Left cardiac atrium (tissue), 4 donors: ENCODE measurements at regions of chr1 and their contacts with region 1.

Region 1: GRCh38 chr1:212782422-212783154 is 9.0 kb downstream of the NSL1 start:
- DNase-seq: no peak
- ATAC-seq: peak; percentile 50 to 67

Region 2: DNA sequence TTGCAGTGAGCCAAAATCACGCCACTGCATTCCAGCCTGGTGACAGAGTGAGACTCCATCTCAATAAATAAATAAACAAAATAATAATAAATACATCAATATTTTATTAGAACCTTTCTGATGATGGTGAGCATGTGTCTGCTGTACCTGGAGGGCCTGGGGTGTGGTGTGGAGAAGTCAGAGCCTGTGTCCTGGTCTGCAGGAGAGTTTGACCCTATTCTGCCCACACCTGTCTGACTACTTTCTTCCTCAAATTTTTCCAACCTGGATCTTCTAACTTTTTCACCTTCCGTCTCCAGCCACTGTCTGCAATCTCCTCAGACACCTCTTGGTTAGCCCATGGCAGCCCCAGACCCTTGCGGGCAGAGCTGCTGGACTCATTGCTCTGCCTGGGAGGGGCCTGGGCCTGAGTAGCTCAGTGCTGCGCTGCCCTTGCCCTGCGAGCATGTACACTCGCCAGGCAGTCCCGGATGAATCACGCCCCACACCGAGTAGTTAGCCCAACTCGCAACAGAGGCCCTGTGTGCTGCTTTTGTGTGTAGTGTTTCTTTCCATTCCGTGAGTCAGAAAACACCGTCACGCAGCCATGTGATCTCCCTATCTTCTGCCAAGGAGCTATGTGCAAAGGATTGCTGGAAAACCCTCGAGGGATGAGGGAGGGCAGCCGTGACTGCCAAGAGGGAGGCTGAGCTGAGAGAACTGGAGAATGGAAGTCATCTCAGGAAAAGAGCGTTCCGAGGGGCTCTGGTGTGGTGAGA is 312.7 kb before region 1 on chr1:
- intact Hi-C with region 1: loop called (anchors 5 to 10 kb)
- DNase-seq: peak; percentile 88
- ATAC-seq: peak; percentile 93 to 98

Region 3: DNA sequence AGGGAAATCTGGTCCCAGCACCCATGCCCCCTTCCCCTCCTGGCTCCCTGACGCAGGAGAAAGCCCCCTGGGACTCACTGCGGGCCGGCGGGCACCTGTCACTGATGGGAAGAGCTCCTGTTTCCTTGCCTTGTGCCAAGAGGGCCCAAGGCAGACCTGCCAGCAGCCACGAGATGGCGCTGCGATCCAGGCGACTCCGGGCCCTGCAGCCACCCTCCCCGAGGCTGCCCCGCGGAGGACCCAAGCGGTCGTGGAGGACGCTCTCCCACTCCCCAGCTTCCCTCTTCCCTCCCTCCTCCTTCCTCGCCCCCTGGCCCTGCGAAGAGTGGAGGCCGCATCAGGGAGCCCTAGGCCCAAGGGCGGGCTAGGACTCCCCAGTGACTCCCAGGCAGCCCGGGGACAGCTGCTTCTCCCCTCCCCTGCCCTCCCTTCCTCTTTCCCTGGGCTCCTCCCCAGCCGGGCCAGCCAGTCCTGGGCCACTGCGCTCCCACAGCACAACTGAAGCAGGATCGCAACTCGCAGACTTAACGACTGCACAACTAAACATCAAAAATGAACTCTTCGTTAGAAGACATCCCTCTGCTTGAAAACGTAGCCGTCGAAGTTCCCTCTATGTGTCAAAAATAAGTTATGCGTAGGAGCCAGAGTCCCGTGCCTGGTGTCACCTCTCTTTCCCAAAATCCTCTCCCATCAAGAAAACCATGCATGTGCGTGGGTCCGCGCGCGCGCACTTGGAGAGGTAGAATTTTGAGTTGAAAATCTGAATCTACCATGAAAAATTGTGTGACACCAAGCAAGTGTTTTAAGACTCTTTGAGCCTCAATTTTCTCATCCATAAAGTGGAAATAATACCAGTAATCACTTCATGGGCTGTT is 117.1 kb before region 1 on chr1:
- intact Hi-C with region 1: loop called (anchors 2 to 10 kb)
- DNase-seq: peak; percentile 87
- ATAC-seq: peak; percentile 96 to 98